Panc1 (cell line): ENCODE measurements at regions of chr3 and their contacts with region 1.

Region 1: GRCh38 chr3:45795882-45796765 is at the start of gene SLC6A20:
- DNase-seq: no peak
- ATAC-seq: peak; percentile 60
- H3K4me3 ChIP-seq: peak within 1 kb of the TSS; percentile 39
- H3K27ac ChIP-seq: no peak within 1 kb of the TSS
- H3K4me1 ChIP-seq: peaks cover 7% of the 10 kb centered on the region; the same call in 1 of the 2 replicates
- H3K27me3 ChIP-seq: peaks cover 20% of the 10 kb centered on the region
- CTCF ChIP-seq: no peak
- total RNA-seq, gene SLC6A20: 0.28 TPM

Region 2: DNA sequence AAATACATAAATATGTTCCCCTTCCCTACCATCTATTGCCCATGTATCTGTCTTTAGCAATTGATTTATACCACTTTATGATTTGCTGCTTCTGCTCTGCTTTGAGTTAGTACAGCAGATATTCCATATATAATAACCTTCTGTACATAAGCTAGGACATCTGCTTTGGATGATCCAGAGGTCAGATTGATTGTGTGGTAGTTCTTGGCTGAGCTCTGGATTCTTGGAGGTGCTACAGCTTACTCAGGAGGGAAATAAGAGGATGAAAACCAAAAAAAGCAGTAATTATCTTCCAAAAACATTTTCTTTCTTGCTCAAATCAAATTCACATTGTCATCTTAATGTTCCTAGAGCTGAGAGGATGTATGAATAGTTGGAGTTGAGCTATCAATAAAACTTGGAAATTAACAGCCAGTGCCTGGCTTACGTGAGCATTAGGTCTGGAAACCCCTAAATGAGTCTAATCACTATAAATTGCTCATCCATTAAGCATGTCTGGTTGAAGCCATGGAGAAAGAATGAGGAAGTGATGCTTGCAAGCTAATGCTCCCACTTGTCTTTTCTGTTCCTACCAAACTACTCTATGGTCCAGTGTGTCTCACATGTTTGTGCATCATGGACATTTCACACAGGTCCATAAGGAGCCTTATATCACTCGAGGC is 970.7 kb before region 1 on chr3:
- CTCF ChIA-PET with region 1: no interaction called
- POLR2A ChIA-PET with region 1: interaction called, 11 read pairs
- in situ Hi-C with region 1: no loop called
- intact Hi-C with region 1: no loop called
- DNase-seq: no peak
- ATAC-seq: no peak
- H3K4me3 ChIP-seq: no peak overlapping the region
- H3K27ac ChIP-seq: no peak overlapping the region
- H3K4me1 ChIP-seq: no peaks in the 10 kb centered on the region
- H3K27me3 ChIP-seq: no peaks in the 10 kb centered on the region
- CTCF ChIP-seq: no peak

Region 3: DNA sequence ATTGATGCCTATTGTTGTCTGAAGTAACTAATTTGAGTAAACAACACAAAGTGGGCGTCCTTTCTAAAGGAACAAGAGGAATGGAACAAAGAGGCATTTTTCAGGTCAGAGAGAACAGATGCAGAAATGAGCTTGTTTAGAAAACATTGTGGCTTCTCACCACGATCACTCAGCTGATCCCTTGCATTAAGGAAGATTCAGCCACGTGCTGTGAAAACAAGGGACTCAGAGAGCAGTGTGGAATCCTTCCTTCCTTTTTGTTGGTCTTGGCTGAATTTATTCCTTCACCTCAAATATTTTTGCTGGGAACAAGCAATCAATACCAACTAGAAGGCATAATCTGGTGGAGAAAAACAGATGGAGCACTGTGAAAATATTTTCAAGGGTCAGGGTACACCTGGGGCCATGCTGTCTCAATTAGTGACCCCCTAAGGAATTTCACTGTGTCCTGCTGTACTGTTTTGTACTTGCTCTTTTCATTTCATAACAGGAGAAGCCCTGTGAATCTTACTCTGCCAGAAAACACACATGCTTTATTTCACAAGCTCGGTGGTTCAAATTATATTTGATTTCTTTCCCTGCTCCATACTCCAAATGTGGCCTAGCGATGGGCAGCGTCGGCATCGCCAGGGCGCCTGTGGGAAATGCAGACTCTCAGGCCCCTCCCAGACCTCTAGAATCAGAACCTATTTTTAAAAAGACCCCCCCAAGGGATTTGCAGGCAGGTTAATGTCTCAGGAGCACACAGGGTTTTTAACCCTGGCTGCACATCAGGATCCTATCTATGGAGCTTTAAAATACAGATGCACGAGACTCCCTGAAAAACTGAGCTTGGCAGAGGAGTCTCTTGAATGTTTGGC is 11.8 kb after region 1 on chr3:
- CTCF ChIA-PET with region 1: no interaction called
- POLR2A ChIA-PET with region 1: interaction called, 12 read pairs
- in situ Hi-C with region 1: no loop called
- intact Hi-C with region 1: no loop called
- DNase-seq: no peak
- ATAC-seq: no peak
- H3K4me3 ChIP-seq: no peak overlapping the region
- H3K27ac ChIP-seq: no peak overlapping the region
- H3K4me1 ChIP-seq: no peaks in the 10 kb centered on the region
- H3K27me3 ChIP-seq: no peaks in the 10 kb centered on the region
- CTCF ChIP-seq: no peak